H1 (cell line): ENCODE measurements at regions of chr11 and their contacts with region 1.

Region 1: GRCh38 chr11:93348930-93349329 is 18.4 kb downstream of the DEUP1 start:
- DNase-seq: no peak
- H3K4me3 ChIP-seq: peak overlapping the region in 1 of 4 experiments; percentile 26; a peak in 1 of 8 replicates
- H3K27ac ChIP-seq: no peak overlapping the region
- H3K4me1 ChIP-seq: peaks cover 2 to 11% (median 4%) of the 10 kb centered on the region in 4 experiments; a peak in 4 of 7 replicates
- H3K27me3 ChIP-seq: no peaks in the 10 kb centered on the region
- CTCF ChIP-seq: no peak
- EP300 ChIP-seq: no peak
- POLR2A ChIP-seq: no peak
- RAD21 ChIP-seq: no peak

Region 2: DNA sequence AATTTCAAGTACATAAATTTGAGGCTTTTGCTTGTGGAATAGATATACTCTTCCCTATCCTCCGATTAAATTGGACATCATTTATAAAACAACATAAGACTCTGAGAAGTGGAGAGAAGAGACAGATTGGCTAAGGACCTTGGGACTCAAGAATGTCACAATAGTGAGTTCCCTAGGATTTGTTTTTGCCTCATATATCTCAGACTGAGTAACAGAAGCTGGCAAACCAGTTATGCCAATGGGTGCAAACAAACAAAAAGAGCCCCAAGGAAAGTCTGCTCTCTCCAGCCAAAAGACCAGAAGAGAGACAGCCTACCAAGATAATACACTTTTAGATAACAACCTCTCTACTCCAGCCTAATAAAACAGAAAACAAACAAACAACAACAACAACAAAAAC is 10.5 kb after region 1 on chr11:
- CTCF ChIA-PET with region 1: interaction called, 10 read pairs
- POLR2A ChIA-PET with region 1: no interaction called
- DNase-seq: no peak
- H3K4me3 ChIP-seq: no peak overlapping the region
- H3K27ac ChIP-seq: no peak overlapping the region
- H3K4me1 ChIP-seq: no peaks in the 10 kb centered on the region
- H3K27me3 ChIP-seq: no peaks in the 10 kb centered on the region
- CTCF ChIP-seq: no peak
- EP300 ChIP-seq: no peak
- POLR2A ChIP-seq: no peak
- RAD21 ChIP-seq: no peak